Activated T-helper 1 cell treated with anti-CD3 and anti-CD28 coated beads, Interleukin-12 subunit alpha, Interleukin-12 subunit beta, Interleukin-2, Interleukin-4 antibody, amounts not matched to agents 30 ng/mL and 10 ng/mL and 1 ng/mL, durations not matched to agents 14 hours and 24 hours and 36 hours (primary cell): ENCODE measurements at regions of chr1 and their contacts with region 1.

Region 1: DNA sequence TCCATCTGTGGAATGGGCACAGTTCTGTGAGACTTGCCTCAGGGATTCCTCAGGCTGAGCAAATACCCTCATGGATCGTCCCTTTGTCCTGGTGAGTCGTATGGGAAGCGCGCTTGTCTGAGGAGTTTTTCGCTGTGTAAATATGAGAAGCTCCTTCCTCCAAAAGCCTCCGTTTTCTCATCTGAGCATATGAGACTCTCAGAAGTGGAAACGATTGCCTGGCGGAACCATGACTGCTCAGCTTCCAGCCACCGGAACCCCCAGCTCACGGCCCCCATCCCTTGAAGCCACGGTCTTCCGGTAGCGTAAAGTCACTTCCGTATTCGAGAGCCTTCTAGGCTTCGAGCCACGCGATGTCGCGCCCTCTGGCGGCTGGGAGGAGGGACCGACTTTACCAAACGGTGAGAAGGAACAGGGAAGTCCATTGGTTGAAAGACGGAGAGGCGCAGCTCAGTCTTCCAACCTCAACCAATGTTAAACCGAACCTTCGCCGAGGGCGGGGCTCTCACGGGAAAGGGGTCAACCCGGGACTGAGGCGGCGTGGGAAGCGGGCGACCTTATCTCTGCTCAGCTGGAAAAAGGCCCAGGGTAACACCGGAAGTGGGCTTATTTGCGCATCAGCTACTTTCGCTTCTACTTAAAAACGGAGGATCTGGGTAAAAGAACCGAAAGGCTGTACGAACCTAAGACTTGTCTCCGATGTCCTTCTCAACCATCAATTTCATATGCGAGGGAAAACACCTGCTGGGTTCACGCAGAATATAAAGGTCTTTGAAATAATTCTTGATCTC is 46.2 kb downstream of the AZIN2 start:
- DNase-seq: peak; percentile 99
- H3K4me3 Mint-ChIP-seq: peak overlapping the region; percentile 96
- H3K27ac Mint-ChIP-seq: peak overlapping the region; percentile 96
- H3K4me1 Mint-ChIP-seq: peaks cover 45% of the 10 kb centered on the region
- H3K27me3 Mint-ChIP-seq: no peaks in the 10 kb centered on the region

Region 2: GRCh38 chr1:32650752-32651460 is 476.3 kb before region 1 on chr1 and contains the start of gene RBBP4:
- intact Hi-C with region 1: loop called (anchors 1 kb)
- DNase-seq: peak; percentile 99
- H3K4me3 Mint-ChIP-seq: peak within 1 kb of the TSS; percentile 94
- H3K27ac Mint-ChIP-seq: peak within 1 kb of the TSS; percentile 100
- H3K4me1 Mint-ChIP-seq: peaks cover 55% of the 10 kb centered on the region
- H3K27me3 Mint-ChIP-seq: peaks cover 2% of the 10 kb centered on the region
- total RNA-seq, gene RBBP4: 315 TPM in 2 replicates

Region 3: DNA sequence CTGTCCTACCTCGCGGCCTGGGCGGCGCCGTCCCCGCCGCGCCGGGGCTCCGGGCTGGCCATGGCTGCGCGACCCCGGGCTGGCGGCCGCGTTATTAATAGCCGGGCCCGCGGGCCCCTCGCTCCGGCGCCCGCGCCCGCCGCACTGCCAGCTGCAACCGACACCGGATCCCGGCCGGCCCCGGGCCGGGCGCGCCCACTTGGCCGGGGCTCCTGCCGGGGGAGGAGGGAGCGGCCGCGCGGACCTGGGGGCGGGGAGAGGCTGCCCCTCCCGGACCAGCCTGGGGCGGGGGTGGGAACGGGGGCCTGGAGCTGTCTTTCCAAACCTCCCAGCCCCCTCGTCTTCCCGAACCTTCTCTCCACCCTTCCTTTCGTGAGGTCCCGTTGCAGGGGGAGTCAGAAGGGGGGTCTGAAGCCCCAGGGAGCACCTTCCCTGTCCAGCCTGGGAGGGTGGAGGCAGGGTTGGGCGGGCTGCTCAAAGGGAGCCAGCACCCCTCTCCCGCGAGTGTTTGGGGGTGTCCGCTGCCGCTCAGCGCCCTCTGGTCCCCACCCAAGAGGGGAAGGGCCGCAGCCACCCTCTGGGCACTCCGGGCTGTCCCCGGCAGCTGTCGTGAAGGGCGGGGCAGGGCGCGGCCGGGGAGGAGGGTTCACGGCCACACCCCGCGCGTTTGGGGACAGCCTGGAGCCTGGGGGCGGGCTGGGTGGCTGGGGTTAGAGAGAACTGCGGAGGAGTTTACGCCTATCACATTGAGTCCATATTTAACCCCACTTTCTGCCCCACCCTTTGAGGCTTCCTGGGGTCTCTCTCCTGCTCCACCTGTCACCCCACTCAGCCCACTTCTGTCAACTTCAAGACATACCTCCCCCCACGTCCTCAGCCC is 424.4 kb before region 1 on chr1 and contains the start of gene SYNC:
- intact Hi-C with region 1: no loop called
- DNase-seq: peak; percentile 17
- H3K4me3 Mint-ChIP-seq: peak within 1 kb of the TSS; percentile 33
- H3K27ac Mint-ChIP-seq: no peak within 1 kb of the TSS
- H3K4me1 Mint-ChIP-seq: peaks cover 4% of the 10 kb centered on the region
- H3K27me3 Mint-ChIP-seq: peaks cover 34% of the 10 kb centered on the region
- total RNA-seq, gene SYNC: 0.05 TPM in 1 of 2 replicates, not detected in the other

Region 4: GRCh38 chr1:33025181-33025571 is 102.0 kb before region 1 on chr1:
- intact Hi-C with region 1: loop called (anchors 1 kb)
- DNase-seq: no peak
- H3K4me3 Mint-ChIP-seq: peak overlapping the region; percentile 17
- H3K27ac Mint-ChIP-seq: peak overlapping the region; percentile 86
- H3K4me1 Mint-ChIP-seq: peaks cover 63% of the 10 kb centered on the region
- H3K27me3 Mint-ChIP-seq: peaks cover 2% of the 10 kb centered on the region

Region 5: DNA sequence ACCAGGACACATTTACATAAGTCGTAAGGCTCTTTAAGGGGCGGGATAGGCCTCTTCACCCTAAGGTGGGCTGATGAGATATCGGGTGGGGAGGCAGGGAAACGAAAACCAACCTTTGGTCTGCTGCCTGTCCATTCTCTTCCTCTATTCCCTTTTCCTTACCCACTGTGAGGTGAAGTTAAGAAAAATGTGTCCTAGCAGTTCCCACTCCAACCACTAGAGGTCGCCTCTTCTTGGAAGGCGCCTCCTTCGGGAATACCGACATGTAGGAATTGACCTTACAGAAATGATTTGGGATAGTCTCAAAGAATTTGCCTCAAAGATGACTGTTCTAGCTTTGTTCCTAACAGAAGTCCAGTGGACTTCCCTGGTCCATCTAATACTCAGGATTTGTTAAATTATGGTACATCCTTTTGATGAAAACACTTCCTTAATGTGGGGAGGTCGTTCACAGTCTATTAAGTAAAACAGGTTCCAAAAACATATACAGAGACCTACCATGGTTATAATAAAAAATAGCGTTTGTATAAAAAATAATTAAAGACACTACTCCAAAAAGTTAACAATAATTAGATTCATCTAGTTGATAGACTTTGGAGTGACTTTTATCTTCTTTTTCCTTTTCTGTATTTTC is 32.1 kb before region 1 on chr1:
- intact Hi-C with region 1: loop called (anchors 1 kb)
- DNase-seq: no peak
- H3K4me3 Mint-ChIP-seq: no peak overlapping the region
- H3K27ac Mint-ChIP-seq: no peak overlapping the region
- H3K4me1 Mint-ChIP-seq: peaks cover 57% of the 10 kb centered on the region
- H3K27me3 Mint-ChIP-seq: no peaks in the 10 kb centered on the region

Region 6: GRCh38 chr1:33349778-33350610 is 222.8 kb after region 1 on chr1:
- intact Hi-C with region 1: loop called (anchors 2 kb)
- DNase-seq: peak; percentile 80
- H3K4me3 Mint-ChIP-seq: peak overlapping the region; percentile 92
- H3K27ac Mint-ChIP-seq: peak overlapping the region; percentile 91
- H3K4me1 Mint-ChIP-seq: peaks cover 42% of the 10 kb centered on the region
- H3K27me3 Mint-ChIP-seq: peaks cover under 1% of the 10 kb centered on the region